ENCODE measurements at regions of chr3 and their contacts with region 1.

Region 1: GRCh38 chr3:111803123-111803593 is 55.9 kb upstream of the PHLDB2 start:
- DNase-seq: peak; percentile 61
- H3K4me3 ChIP-seq: no peak overlapping the region
- H3K27ac ChIP-seq: peak overlapping the region; percentile 27 to 48
- H3K4me1 ChIP-seq: no peaks in the 10 kb centered on the region
- H3K27me3 ChIP-seq: no peaks in the 10 kb centered on the region
- CTCF ChIP-seq: no peak
- POLR2A ChIP-seq: no peak

Region 2: GRCh38 chr3:111737706-111738086 is 65.5 kb before region 1 on chr3:
- intact Hi-C with region 1: loop called (anchors 10 kb)
- DNase-seq: peak; percentile 88
- H3K4me3 ChIP-seq: no peak overlapping the region
- H3K27ac ChIP-seq: peak overlapping the region; percentile 52 to 64
- H3K4me1 ChIP-seq: peaks cover 12% of the 10 kb centered on the region
- H3K27me3 ChIP-seq: no peaks in the 10 kb centered on the region
- CTCF ChIP-seq: no peak
- POLR2A ChIP-seq: no peak